ENCODE measurements at regions of chr11 and their contacts with region 1.

Region 1: DNA sequence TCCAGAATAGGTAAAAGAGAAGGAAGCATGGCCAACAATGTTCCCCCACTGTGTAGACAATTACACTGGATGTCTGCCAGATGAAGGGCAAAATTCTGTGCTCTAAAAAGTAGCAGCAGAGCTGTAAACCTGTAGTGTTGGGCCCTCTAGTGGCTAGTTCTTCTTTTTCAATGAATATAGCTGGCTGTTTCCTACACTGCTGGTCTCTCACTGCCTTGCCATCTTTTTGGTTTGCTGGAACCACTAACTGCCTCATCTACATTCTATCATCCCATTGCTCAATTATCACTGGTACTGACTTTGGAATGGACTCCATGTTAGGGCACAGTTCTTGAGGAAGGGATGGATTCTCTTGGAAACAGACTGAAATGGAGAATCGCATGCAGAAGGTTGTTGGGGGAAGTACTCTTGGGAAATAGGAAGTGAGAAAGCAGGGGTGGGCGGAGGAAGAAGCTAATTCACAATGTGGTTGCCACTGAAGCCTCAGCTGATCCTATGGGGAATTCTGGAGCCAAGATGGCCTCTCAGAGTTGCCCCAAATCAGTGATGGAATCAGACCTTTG is 17.9 kb downstream of the KCNE3 start:
- H3K4me3 ChIP-seq: no peak overlapping the region
- H3K27ac ChIP-seq: no peak overlapping the region
- H3K4me1 ChIP-seq: no peaks in the 10 kb centered on the region; the same call in 1 of the 2 replicates
- CTCF ChIP-seq: peak; percentile 50; the same call in 1 of the 2 replicates

Region 2: DNA sequence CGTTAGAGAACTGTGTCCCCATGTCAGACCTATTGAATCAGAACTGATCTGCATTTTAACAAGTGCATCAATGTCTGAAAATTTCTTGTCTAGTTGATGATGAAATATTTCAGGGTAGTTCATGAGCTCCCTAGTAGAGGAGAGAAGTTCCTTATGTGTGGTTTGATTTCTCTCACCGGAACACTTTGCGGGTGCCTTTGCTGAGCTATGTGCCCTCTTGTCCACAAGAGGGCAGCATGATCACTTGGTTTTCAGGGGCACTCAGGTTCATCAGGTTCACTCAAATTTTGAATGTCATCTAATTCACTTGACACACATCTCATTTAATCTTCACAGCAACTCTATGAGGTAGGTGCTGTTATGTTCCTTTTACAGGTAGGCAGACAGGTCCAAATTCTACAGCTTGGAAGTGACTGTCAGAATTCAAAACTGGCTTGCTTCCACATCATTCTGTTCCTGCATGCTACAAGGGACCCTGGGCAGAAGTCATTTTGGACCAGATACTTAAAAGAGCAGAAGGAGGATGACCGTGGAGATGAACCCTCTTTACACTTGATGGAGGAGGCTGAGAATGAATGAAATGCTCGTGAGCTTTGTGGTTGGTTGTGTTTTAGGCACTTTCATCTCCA is 193.6 kb before region 1 on chr11:
- CTCF ChIA-PET with region 1: interaction called, 221 read pairs
- POLR2A ChIA-PET with region 1: interaction called, 4 read pairs
- H3K4me3 ChIP-seq: no peak overlapping the region
- H3K27ac ChIP-seq: no peak overlapping the region
- H3K4me1 ChIP-seq: no peaks in the 10 kb centered on the region
- CTCF ChIP-seq: peak; percentile 43; the same call in 1 of the 2 replicates

Region 3: GRCh38 chr11:74462009-74462408 is 12.6 kb after region 1 on chr11:
- CTCF ChIA-PET with region 1: interaction called, 24 read pairs
- POLR2A ChIA-PET with region 1: no interaction called
- H3K4me3 ChIP-seq: no peak overlapping the region
- H3K27ac ChIP-seq: no peak overlapping the region
- H3K4me1 ChIP-seq: no peaks in the 10 kb centered on the region
- CTCF ChIP-seq: no peak

Region 4: DNA sequence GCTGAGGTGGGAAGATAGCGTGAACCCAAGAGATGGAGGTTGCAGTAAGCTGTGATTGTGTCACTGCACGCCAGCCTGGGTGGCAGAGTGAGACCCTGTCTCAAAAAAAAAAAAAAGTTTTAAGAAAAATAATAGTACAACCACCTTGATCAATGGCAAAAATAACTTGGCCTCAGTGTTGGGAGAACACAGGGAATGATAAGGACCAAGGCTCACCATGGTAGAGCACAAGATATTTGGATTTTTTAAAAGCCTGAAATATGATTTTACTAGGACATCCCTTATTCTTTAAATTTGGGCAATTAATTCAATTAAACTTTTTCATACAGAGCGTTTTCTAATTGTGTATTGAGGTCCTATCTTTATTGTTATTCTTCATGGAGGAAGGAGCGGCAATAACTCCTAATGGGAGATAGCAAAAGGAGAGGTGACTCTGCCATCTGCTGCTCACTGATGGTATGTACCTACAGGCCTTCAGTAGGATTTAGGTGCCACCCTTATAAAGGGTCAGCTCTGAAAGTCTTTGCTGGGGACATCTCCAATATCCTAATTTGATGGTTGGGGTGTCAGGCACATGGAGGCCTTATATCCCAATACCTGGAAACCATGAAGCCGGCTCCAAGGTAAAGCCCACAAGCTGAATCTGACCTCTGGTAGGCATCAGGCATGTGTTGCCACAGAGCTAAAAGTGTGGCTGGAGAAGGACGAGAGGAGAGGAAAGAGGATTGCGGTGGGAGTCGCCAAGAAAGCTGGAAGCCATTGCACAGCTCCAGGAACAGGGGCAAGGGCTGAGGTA is 121.0 kb after region 1 on chr11:
- CTCF ChIA-PET with region 1: interaction called, 187 read pairs
- POLR2A ChIA-PET with region 1: no interaction called
- H3K4me3 ChIP-seq: no peak overlapping the region
- H3K27ac ChIP-seq: no peak overlapping the region
- H3K4me1 ChIP-seq: no peaks in the 10 kb centered on the region
- CTCF ChIP-seq: no peak; the same call in 1 of the 2 replicates

Measured in HEK293 (cell line).